ENCODE measurements at regions of chr13 and their contacts with region 1.

Region 1: DNA sequence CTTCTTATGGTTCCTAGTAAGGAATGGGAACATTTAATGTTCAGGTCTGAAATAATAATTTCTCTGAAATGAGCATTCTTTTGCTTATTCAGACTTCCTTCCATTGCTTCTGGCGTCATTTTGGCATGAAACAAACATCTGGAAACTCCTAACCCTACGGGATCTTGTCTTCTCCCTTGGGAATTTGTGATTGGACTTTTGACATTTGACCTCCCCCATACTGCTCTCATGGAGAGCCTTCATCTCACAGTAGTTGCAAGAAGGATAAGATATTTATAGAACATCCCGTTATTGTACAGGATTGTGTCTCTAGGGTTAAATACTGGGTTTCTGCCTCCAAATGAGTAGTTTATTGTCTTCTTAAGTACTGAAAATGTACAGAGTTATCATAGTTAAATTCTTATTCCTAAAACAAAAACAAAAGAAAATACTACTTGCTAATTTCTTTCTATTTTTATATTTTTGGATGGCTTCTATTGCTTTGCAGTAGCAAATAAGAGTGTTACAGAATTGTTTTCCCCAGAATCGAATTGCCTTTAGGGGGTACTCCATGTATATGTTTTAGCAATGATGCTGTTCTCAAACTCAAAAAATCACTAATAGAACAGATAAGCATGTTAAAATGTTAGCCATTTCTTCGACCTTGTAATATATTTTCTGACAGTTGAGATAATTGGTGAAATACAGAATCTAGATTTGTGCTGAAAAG is 366.8 kb downstream of the DLEU7 start:
- DNase-seq: no peak
- ATAC-seq: no peak
- H3K4me3 ChIP-seq: no peak overlapping the region
- H3K27ac ChIP-seq: no peak overlapping the region
- H3K4me1 ChIP-seq: no peaks in the 10 kb centered on the region
- H3K27me3 ChIP-seq: no peaks in the 10 kb centered on the region
- CTCF ChIP-seq: no peak
- POLR2A ChIP-seq: no peak

Region 2: GRCh38 chr13:49635599-49636433 is 840.9 kb before region 1 on chr13:
- in situ Hi-C with region 1: no loop called
- intact Hi-C with region 1: no loop called
- DNase-seq: no peak
- ATAC-seq: no peak
- H3K4me3 ChIP-seq: peak overlapping the region in 3 of 4 donors; percentile 2 to 14 (median 12)
- H3K27ac ChIP-seq: no peak overlapping the region
- H3K4me1 ChIP-seq: peaks cover 0 to 5% of the 10 kb centered on the region in 2 donors
- H3K27me3 ChIP-seq: no peaks in the 10 kb centered on the region
- CTCF ChIP-seq: no peak
- POLR2A ChIP-seq: no peak

Region 3: DNA sequence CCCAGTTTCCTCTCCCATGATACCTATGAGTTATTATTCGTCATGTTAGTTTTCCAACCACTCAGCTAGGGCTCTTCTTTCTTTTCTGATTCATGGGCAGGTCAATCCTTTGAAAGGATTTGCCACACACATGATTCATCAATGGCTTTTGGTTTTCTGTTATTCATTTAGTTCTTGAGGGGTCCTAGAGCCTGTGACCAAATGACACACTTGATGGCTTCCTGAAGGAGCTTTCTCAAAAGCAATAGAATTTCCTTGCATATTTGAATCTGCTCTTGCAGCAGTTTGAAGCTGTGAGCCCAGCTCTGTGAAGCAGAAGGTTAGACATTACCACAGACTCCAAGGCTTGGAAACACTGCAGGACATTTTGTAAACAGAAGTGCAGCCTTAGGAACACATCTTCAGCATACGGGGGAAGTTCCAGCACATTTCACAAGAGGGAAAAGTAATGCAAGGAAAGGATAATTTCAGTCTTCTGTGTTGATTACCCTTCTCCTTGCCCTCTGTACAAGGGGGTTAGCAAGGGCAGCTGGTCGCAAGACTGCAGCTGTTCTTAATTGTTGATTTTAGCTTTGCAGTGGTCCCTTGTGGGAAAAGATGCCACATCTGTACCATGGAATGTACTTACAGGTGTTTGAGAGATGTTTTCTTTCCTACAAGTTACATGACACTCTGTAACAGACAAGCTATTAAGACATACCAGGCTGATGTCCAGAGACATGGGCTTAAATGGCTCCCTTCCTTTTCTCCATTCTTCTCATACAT is 122.9 kb before region 1 on chr13:
- in situ Hi-C with region 1: no loop called
- intact Hi-C with region 1: no loop called
- DNase-seq: no peak
- ATAC-seq: peak; percentile 49 to 58
- H3K4me3 ChIP-seq: no peak overlapping the region
- H3K27ac ChIP-seq: peak overlapping the region in 1 of 4 donors; percentile 40
- H3K4me1 ChIP-seq: peaks cover 15% of the 10 kb centered on the region in 2 donors
- H3K27me3 ChIP-seq: no peaks in the 10 kb centered on the region
- CTCF ChIP-seq: no peak
- POLR2A ChIP-seq: no peak

Region 4: DNA sequence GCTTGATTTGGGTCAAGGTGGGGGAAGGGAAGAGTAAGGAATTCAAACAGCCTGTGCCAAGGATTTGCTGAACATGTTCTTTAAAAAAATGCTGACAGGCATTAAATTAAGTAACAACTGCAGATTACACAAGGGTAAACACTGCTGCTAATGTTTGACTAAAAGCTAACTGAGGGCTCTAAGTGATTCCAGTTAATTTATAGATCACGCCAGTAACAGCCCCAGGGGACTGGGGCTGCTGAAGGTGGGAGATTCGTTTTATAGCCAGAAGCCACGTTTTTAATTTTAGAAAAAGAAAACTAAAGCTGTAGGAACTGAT is 45.1 kb after region 1 on chr13:
- in situ Hi-C with region 1: loop called in 1 of 4 experiments (anchors 5 kb)
- intact Hi-C with region 1: no loop called
- DNase-seq: no peak
- ATAC-seq: peak; percentile 70 to 85
- H3K4me3 ChIP-seq: peak overlapping the region in 1 of 4 donors; percentile 28
- H3K27ac ChIP-seq: peak overlapping the region; percentile 73 to 81 (median 74)
- H3K4me1 ChIP-seq: peaks cover 45 to 61% of the 10 kb centered on the region in 2 donors
- H3K27me3 ChIP-seq: no peaks in the 10 kb centered on the region
- CTCF ChIP-seq: no peak
- POLR2A ChIP-seq: no peak